GM23248 (cell line): ENCODE measurements at regions of chr3 and their contacts with region 1.

Region 1: DNA sequence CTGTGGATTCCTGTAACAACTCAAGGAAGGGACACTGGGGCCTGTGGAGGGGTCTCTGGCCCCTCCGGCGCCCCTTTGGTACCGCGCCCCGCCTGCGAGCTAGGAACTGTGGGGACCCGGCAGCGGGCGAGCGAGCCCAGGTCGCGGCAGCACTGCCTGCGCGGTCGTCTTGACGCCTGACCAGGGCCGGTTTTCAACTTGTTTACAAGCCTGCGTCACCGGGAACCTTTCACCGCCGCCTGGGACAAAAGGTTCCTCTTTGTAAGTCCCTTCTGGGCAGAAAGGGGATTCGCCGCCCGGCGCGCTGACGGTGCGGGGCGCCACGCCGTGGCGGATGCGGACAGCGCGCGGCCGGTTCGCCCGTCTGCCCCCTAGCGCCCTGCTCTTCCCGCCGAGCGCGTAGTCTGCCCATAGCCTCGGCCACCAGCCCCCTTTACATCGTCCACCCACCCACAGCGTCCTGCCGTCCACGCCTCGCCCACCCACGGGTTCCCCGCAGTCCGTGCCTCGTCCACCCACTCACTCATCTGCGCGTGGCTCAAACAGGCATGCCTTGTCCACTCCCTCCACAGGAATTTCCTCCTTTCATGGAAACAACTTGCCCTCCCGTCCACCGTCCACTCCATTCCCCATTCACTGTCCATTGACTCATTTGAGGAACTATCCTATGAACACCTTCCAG is 5.5 kb upstream of the CFAP100 start:
- DNase-seq: peak; percentile 90
- H3K4me3 ChIP-seq: peak overlapping the region; percentile 80
- H3K27ac ChIP-seq: no peak overlapping the region
- H3K4me1 ChIP-seq: no peaks in the 10 kb centered on the region
- H3K27me3 ChIP-seq: peaks cover 16% of the 10 kb centered on the region

Region 2: DNA sequence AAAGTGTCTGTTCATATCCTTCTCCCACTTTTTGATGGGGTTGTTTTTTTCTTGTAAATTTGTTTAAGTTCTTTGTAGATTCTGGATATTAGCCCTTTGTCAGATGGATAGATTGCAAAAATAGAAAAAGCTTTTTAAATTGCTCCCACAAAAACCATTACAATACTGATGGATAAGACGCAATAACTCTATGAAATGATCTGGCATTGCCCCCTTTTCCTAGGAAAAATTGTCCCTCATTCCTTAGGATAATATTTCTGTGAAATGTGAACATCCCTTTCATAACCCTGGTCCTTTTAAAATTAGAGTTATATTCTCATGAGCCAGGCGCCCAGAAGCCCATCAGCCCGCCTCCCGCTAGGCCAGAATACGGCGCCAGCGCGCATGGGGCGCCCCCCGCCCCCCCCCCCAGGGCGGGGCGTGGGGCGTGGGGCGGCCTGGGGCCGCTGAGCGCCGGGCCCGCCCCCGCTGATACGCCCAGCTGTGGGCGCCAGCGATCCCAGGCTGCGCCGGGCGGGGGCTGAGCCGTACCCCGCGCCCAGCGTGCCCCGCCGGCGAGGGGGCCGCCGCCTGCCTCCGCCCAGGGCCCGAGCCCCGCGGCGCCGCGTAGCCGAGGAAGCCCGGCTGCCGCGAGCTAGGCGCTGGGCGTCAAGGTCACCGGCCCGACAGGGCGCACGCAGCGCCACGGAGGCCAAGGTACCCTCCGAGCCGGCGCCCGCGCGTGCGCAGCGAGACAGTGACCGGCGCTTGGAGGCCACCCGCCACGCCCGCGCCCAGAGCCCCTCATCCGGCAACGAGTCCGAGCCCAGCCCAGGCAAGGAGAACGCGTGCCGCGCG is 431.4 kb before region 1 on chr3:
- in situ Hi-C with region 1: loop called (anchors 25 kb)
- DNase-seq: no peak
- H3K4me3 ChIP-seq: no peak overlapping the region
- H3K27ac ChIP-seq: no peak overlapping the region
- H3K4me1 ChIP-seq: no peaks in the 10 kb centered on the region
- H3K27me3 ChIP-seq: peaks cover 11% of the 10 kb centered on the region; the same call in 1 of the 2 replicates

Region 3: DNA sequence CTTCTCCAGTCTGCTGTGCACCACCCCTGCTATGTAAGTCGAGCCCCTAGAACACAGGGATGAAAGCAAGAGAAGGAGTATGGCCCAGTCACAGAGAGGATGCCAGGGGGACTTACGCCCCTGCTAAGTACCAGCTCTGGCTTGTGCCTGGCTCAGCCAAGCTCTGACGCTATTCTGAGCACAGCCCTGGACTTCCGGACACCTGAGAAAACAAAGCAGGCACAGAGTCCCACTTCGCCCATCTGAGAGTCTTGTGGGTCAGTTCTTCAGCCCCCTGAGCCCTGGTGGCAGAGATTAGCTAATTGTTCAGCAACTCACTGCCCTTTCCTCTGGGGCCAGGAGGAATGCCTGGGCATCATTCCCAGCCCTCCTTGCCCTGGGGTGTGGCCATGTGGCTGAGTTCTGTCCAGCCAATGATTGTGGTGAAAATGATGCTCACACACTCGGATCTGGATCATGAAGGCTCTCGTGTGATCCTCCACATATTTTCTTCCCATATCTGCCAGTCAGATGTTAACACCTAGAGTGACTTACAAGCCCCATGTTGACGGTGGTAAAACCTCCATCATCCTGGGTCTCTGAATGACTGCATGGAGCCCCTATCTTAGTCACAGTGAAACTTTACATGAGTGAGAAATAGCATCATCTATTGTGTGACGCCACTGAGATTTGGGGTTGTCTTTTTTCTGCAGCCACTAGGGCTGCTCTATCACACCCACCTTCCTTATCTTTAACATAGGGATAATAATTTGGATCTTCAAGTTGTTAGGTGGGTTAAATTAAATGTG is 1095.5 kb after region 1 on chr3:
- in situ Hi-C with region 1: no loop called
- DNase-seq: peak; percentile 58
- H3K4me3 ChIP-seq: no peak overlapping the region
- H3K27ac ChIP-seq: no peak overlapping the region
- H3K4me1 ChIP-seq: 0 out of 2 replicates have a peak, but pooled peaks cover 4% of the 10 kb centered on the region
- H3K27me3 ChIP-seq: peaks cover 22% of the 10 kb centered on the region